ENCODE measurements at regions of chr1 and their contacts with region 1.

Region 1: GRCh38 chr1:58783993-58784757 is at the start of gene JUN:
- DNase-seq: peak; percentile 99 to 100
- ATAC-seq: peak; percentile 85 to 95 (median 89)
- H3K4me3 ChIP-seq: peak within 1 kb of the TSS; percentile 74 to 97 (median 94)
- H3K27ac ChIP-seq: peak within 1 kb of the TSS; percentile 98 to 100 (median 100)
- H3K4me1 ChIP-seq: peaks cover 0 to 33% (median 22%) of the 10 kb centered on the region in 9 donors
- H3K27me3 ChIP-seq: no peaks in the 10 kb centered on the region
- CTCF ChIP-seq: peak in 3 of 9 donors; percentile 32 to 37 (median 34)
- total RNA-seq, gene JUN: 47.0 to 209 (median 78.8) TPM

Region 2: DNA sequence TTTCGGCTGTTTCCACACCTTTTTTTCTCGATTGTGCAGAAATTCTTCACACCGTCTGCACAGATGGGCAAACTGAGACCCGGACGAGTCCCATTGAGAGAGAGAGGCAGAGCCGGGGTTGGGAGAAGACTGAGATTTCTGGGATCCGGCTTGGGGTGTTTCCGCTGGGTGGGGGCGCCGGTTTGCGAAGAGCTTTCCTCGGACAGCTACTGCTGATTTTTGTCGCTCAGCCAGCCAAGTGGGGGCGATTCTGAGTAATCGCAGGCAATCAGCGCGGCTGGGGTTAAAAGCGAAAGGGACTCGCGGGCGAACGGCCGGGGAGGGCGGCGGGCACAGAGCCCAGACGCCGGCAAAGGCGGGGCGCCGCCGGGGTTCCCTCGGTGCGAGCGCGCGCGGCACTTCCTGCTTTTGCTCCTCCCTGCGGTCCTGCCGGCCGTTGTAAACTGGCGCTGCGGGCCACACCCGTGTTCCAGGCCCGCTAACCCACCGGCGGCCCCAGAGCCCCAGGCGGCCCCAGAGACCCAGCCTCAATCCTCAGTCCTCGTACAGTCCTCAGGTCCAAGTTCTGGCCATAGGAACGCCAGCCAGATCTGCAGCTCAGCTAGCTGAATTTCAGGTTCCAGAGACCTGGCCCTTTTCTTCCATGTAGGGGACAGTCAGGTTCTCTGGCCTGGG is 32.0 kb after region 1 on chr1:
- intact Hi-C with region 1: loop called in 6 of 10 experiments (anchors 1 to 2 kb)
- DNase-seq: peak; percentile 90 to 93
- ATAC-seq: peak; percentile 85 to 95 (median 92)
- H3K4me3 ChIP-seq: peak overlapping the region; percentile 39 to 67 (median 59)
- H3K27ac ChIP-seq: peak overlapping the region; percentile 80 to 97 (median 90)
- H3K4me1 ChIP-seq: peaks cover 0 to 74% (median 32%) of the 10 kb centered on the region in 9 donors
- H3K27me3 ChIP-seq: no peaks in the 10 kb centered on the region
- CTCF ChIP-seq: peak in 6 of 9 donors; percentile 8 to 35 (median 19)

Region 3: GRCh38 chr1:59020151-59020997 is 236.2 kb after region 1 on chr1:
- intact Hi-C with region 1: loop called in 1 of 10 experiments (anchors 1 kb)
- DNase-seq: peak; percentile 24 to 63
- ATAC-seq: peak; percentile 46 to 88 (median 76)
- H3K4me3 ChIP-seq: peak overlapping the region in 8 of 10 donors; percentile 4 to 48 (median 35)
- H3K27ac ChIP-seq: peak overlapping the region; percentile 41 to 90 (median 82)
- H3K4me1 ChIP-seq: peaks cover 7 to 50% (median 33%) of the 10 kb centered on the region in 9 donors
- H3K27me3 ChIP-seq: no peaks in the 10 kb centered on the region
- CTCF ChIP-seq: no peak

Region 4: DNA sequence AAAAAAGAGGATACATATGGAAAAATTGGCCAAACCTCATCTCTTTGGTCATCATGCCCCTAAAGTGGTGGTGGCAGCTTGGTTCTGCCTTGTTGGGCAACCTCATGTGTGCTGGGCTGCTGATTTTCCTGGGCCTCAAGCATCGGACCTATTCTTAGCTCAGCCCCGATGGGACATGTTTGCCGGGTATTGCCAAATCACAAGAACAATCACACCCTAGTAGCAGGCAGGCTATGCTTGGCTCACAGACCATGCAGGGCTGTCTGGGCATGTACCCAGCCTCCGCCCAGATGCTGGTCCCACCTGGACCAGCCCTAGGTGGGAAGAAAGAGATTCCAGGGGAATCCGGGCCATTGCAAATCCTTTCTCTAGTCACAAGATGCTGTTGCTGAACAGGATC is 323.3 kb after region 1 on chr1:
- intact Hi-C with region 1: loop called in 1 of 10 experiments (anchors 10 kb)
- DNase-seq: peak; percentile 49 to 69
- ATAC-seq: peak; percentile 84 to 97 (median 92)
- H3K4me3 ChIP-seq: no peak overlapping the region
- H3K27ac ChIP-seq: peak overlapping the region; percentile 36 to 74 (median 68)
- H3K4me1 ChIP-seq: peaks cover 0 to 27% (median 11%) of the 10 kb centered on the region in 9 donors
- H3K27me3 ChIP-seq: no peaks in the 10 kb centered on the region
- CTCF ChIP-seq: no peak

Region 5: GRCh38 chr1:59296358-59297256 is 512.4 kb after region 1 on chr1 and contains the start of gene FGGY:
- intact Hi-C with region 1: loop called (anchors 2 to 10 kb)
- DNase-seq: peak; percentile 97 to 99
- ATAC-seq: peak; percentile 93 to 98 (median 94)
- H3K4me3 ChIP-seq: peak within 1 kb of the TSS; percentile 45 to 68 (median 61)
- H3K27ac ChIP-seq: peak within 1 kb of the TSS; percentile 92 to 99 (median 97)
- H3K4me1 ChIP-seq: peaks cover 0 to 50% (median 17%) of the 10 kb centered on the region in 9 donors
- H3K27me3 ChIP-seq: no peaks in the 10 kb centered on the region
- CTCF ChIP-seq: peak in 1 of 9 donors; percentile 6
- total RNA-seq, gene FGGY: 26.3 to 51.8 (median 36.6) TPM

Region 6: GRCh38 chr1:59707178-59707791 is 923.1 kb after region 1 on chr1:
- intact Hi-C with region 1: loop called in 2 of 10 experiments (anchors 5 to 10 kb)
- DNase-seq: peak in 1 of 2 donors; percentile 51
- ATAC-seq: peak; percentile 78 to 91 (median 84)
- H3K4me3 ChIP-seq: no peak overlapping the region
- H3K27ac ChIP-seq: peak overlapping the region; percentile 7 to 87 (median 60)
- H3K4me1 ChIP-seq: peaks cover 3 to 57% (median 45%) of the 10 kb centered on the region in 9 donors
- H3K27me3 ChIP-seq: no peaks in the 10 kb centered on the region
- CTCF ChIP-seq: no peak